CD8-positive, alpha-beta memory T cell (primary cell): ENCODE measurements at regions of chr7 and their contacts with region 1.

Region 1: GRCh38 chr7:48109848-48110663 is 21.0 kb downstream of the UPP1 start:
- DNase-seq: peak; percentile 76 to 89 (median 81)
- H3K4me3 ChIP-seq: no peak overlapping the region
- H3K4me3 Mint-ChIP-seq: peak overlapping the region in 2 of 7 donors; percentile 26 to 32
- H3K27ac ChIP-seq: no peak overlapping the region
- H3K27ac Mint-ChIP-seq: peak overlapping the region; percentile 25 to 93 (median 88)
- H3K4me1 ChIP-seq: peaks cover 13% of the 10 kb centered on the region
- H3K4me1 Mint-ChIP-seq: peaks cover 11 to 13% (median 12%) of the 10 kb centered on the region in 3 donors
- H3K27me3 ChIP-seq: no peaks in the 10 kb centered on the region
- H3K27me3 Mint-ChIP-seq: peaks cover 0 to 2% of the 10 kb centered on the region in 2 donors

Region 2: DNA sequence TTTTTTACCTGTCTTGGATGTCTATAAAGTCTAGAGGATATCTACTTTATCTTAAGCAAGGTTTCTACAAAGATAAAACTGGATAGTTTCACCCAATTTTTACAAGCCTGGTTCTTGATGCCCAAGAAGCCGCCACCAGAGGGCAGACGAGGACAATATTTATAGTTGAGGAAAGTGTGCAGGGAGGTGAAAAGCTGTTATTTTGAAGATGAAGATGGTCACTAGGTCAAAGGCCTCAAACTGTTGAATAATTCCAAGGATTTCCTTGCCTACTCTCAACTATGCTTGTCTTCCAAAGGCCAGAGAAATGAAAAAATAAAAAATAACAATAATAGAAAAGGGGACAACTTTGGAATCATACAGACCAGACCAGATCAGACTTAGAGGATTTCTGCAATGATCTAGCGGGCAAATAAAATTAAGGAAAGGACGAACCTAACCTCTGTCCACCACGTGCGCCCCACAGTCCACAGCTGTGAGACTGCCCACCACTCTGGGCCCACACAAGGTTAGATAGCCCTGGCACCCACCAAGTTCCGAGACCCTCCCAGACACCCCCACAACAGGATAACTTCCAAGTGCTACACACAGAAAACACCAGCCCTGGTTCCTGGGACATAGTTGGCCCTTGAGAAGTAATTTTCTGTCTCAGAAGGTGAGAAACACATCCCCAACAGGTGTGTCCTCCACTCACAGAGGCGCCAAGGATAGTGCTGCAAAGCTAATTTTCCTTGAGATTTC is 164.6 kb before region 1 on chr7:
- CTCF ChIA-PET with region 1: interaction called, 58 read pairs
- POLR2A ChIA-PET with region 1: no interaction called
- DNase-seq: peak; percentile 43 to 74 (median 59)
- H3K4me3 ChIP-seq: no peak overlapping the region
- H3K4me3 Mint-ChIP-seq: no peak overlapping the region
- H3K27ac ChIP-seq: no peak overlapping the region
- H3K27ac Mint-ChIP-seq: no peak overlapping the region
- H3K4me1 ChIP-seq: no peaks in the 10 kb centered on the region
- H3K4me1 Mint-ChIP-seq: no peaks in the 10 kb centered on the region
- H3K27me3 ChIP-seq: no peaks in the 10 kb centered on the region
- H3K27me3 Mint-ChIP-seq: peaks cover 0 to 3% of the 10 kb centered on the region in 2 donors

Region 3: GRCh38 chr7:47979145-47979831 is 130.8 kb before region 1 on chr7 and contains the start of gene HUS1:
- CTCF ChIA-PET with region 1: interaction called, 12 read pairs
- POLR2A ChIA-PET with region 1: no interaction called
- DNase-seq: peak; percentile 85 to 96 (median 87)
- H3K4me3 ChIP-seq: peak within 1 kb of the TSS; percentile 52
- H3K4me3 Mint-ChIP-seq: peak within 1 kb of the TSS; percentile 88 to 99 (median 94)
- H3K27ac ChIP-seq: peak within 1 kb of the TSS; percentile 86
- H3K27ac Mint-ChIP-seq: peak within 1 kb of the TSS; percentile 86 to 100 (median 98)
- H3K4me1 ChIP-seq: peaks cover 12% of the 10 kb centered on the region
- H3K4me1 Mint-ChIP-seq: peaks cover 20 to 40% (median 37%) of the 10 kb centered on the region in 3 donors
- H3K27me3 ChIP-seq: no peaks in the 10 kb centered on the region
- H3K27me3 Mint-ChIP-seq: no peaks in the 10 kb centered on the region
- total RNA-seq, gene HUS1: 64.9 to 65.0 TPM

Region 4: DNA sequence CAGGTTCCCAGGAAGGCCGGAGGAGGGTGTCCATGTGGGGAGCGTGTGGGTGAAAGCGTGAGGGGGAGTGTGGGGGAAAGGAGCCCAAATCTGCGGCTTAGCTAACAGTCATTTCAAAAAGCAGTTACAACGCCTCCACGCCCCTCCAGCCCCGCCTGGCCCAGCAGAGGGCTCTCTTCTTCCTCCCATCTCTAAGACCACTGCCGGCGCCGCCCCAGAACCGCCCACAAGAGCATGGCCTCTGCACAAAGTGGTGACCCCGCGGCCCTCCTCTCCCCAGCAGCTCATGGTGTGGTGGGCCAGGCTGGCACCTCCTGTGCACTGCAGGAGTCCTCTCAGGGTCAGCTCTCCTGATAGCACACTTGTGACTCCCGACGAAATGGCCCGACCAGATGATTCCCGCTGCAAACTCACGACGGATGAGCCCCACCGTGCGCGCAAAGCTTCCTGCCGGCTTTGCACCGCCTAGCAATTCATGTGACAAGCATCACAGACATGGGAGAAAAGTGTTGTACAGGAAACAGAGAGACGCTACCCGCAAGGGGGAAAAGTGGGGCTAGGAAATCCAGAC is 118.2 kb before region 1 on chr7:
- CTCF ChIA-PET with region 1: interaction called, 140 read pairs
- POLR2A ChIA-PET with region 1: interaction called, 15 read pairs
- DNase-seq: peak; percentile 73 to 91 (median 81)
- H3K4me3 ChIP-seq: peak overlapping the region; percentile 73
- H3K4me3 Mint-ChIP-seq: peak overlapping the region; percentile 83 to 99 (median 94)
- H3K27ac ChIP-seq: peak overlapping the region; percentile 62
- H3K27ac Mint-ChIP-seq: peak overlapping the region; percentile 80 to 99 (median 96)
- H3K4me1 ChIP-seq: peaks cover 19% of the 10 kb centered on the region
- H3K4me1 Mint-ChIP-seq: peaks cover 16 to 20% (median 16%) of the 10 kb centered on the region in 3 donors
- H3K27me3 ChIP-seq: no peaks in the 10 kb centered on the region
- H3K27me3 Mint-ChIP-seq: peaks cover 0 to 4% of the 10 kb centered on the region in 2 donors

Region 5: DNA sequence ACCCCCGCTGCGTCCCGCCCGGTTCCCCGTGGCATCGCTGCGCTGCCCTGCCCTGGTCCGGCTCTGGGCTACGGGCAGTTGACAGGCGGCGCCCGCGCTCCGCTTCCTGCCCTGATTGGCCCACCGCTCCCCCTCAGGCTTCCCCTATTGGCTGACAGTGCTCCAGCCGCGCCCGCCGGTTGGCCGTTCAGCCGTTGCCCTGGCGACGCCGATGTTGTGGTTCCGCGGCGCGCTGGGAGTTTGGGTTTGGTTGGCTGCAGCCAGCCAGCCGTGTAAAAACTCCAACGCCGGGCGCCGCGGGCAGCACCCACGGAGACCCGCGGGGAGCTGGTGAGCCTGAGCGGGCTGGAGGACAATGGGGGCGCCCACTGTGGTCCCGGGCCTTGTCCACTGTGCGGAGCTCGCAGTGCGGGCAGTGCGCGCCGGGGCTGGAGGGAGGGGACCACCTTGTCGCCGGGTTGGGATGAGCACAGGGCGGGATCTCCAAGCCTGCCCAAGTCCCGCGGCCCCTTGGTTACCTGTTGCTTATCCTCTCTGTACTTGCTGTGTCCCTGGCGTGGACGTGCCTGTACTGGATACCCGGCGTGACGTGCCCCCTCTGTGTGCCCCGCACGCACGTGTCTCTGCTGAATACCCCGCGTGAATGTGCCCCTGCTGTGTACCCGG is 74.6 kb before region 1 on chr7 and contains the start of gene C7orf57:
- CTCF ChIA-PET with region 1: interaction called, 35 read pairs
- POLR2A ChIA-PET with region 1: no interaction called
- DNase-seq: peak; percentile 73 to 92 (median 86)
- H3K4me3 ChIP-seq: peak within 1 kb of the TSS; percentile 67
- H3K4me3 Mint-ChIP-seq: peak within 1 kb of the TSS; percentile 82 to 94 (median 89)
- H3K27ac ChIP-seq: peak within 1 kb of the TSS; percentile 39
- H3K27ac Mint-ChIP-seq: peak within 1 kb of the TSS; percentile 72 to 97 (median 92)
- H3K4me1 ChIP-seq: peaks cover 10% of the 10 kb centered on the region
- H3K4me1 Mint-ChIP-seq: peaks cover 10 to 15% (median 14%) of the 10 kb centered on the region in 3 donors
- H3K27me3 ChIP-seq: peaks cover 8% of the 10 kb centered on the region
- H3K27me3 Mint-ChIP-seq: peaks cover 12 to 22% of the 10 kb centered on the region in 2 donors
- total RNA-seq, gene C7orf57: 0.66 to 0.92 TPM

Region 6: DNA sequence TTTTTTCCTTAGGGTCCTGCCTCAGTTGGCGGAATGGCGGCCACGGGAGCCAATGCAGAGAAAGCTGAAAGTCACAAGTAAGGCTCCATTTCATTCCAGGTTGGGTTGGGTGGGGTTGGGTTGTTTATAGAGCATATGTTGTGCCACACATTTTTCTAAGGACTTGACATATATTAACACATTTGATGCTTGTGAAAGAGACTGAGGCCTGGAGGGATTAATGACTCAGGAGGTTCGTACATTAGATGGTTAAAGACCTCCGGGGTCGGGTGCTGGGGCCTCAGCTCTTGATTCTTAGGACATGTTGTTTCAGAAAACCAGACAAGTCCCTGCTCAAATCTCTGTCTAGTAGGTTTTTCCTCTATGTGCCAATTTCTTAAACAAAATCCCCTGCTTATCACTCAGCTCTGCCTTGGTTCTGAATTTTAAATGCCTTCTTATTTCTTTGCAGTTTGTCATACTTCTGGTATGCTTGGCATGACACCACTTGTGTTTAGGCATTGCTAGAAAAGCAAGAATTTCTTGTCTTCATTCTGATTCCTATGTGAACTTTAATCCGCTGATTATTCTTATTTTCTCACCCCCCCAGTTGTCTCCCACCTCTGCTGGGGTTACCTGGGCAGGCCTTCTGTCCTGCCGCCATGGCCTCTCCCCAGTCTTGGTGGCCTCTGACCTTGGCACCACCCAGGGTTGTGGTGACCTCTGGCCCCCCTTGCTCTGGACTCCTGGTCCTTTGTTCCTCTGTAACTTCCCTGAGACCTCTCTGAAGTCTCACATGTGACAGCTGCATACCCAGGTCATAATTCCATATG is 15.1 kb before region 1 on chr7:
- CTCF ChIA-PET with region 1: interaction called, 34 read pairs
- POLR2A ChIA-PET with region 1: no interaction called
- DNase-seq: no peak
- H3K4me3 ChIP-seq: no peak overlapping the region
- H3K4me3 Mint-ChIP-seq: peak overlapping the region in 5 of 7 donors; percentile 0 to 90 (median 29)
- H3K27ac ChIP-seq: no peak overlapping the region
- H3K27ac Mint-ChIP-seq: peak overlapping the region; percentile 4 to 97 (median 66)
- H3K4me1 ChIP-seq: peaks cover 76% of the 10 kb centered on the region
- H3K4me1 Mint-ChIP-seq: peaks cover 90 to 95% (median 92%) of the 10 kb centered on the region in 3 donors
- H3K27me3 ChIP-seq: no peaks in the 10 kb centered on the region
- H3K27me3 Mint-ChIP-seq: no peaks in the 10 kb centered on the region